ENCODE measurements at regions of chr5 and their contacts with region 1.

Region 1: DNA sequence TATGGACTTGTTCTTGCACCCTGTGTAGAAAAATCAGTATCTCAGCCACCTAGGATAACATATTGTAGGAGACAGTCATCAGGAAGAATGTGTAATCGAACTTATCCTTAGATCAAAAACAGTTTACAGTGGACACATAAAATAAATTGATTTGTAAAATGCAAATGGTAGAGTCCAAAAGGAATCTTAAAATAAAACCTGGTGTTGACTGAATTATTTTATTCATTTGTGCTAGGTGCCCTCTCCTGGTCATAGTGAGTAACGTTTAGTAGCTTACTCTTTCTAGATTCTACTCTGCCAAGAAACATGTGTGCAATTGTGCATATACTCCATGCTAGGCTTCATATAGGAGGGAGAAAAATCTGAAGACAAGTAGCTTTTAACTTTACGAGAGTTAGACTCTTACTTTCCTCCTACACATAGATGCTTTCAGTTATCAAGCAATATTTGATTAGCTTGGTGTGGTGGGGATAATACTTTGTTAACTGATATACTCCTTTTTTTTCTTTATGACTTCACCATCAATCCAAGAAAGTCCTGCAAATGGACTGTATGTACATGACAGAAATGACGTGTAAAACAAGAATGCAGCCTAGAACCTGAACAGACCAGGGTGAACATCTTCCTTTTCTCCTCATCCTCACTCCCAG is 23.7 kb upstream of the LOX start:
- DNase-seq: no peak
- H3K4me3 ChIP-seq: no peak overlapping the region
- CTCF ChIP-seq: peak; percentile 46

Region 2: GRCh38 chr5:121962347-121962670 is 139.5 kb before region 1 on chr5:
- CTCF ChIA-PET with region 1: interaction called, 33 read pairs
- POLR2A ChIA-PET with region 1: no interaction called
- DNase-seq: no peak
- H3K4me3 ChIP-seq: peak overlapping the region; percentile 99
- CTCF ChIP-seq: no peak

Region 3: GRCh38 chr5:121968910-121969607 is 132.7 kb before region 1 on chr5:
- CTCF ChIA-PET with region 1: interaction called, 33 read pairs
- POLR2A ChIA-PET with region 1: no interaction called
- DNase-seq: peak; percentile 97
- H3K4me3 ChIP-seq: no peak overlapping the region
- CTCF ChIP-seq: no peak

Region 4: DNA sequence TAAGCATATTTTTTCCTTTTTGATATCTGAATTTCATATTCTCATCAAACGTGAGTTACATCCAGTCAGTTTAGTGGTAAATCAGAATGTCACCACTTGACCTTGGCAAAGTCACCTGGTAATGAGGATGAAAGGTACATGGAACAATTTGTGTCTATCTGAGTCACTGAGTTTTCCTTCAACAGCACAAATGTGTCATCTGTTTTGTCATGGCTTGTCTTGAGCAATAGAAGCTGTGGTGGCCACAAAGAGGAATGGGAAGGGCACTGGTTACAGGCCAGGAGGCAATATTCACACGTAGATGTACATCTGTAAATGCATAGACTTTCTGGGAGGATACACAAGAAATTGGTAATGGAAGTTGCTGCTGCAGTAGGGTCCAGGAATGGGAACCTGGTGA is 19.2 kb after region 1 on chr5:
- CTCF ChIA-PET with region 1: interaction called, 14 read pairs
- POLR2A ChIA-PET with region 1: no interaction called
- DNase-seq: no peak
- H3K4me3 ChIP-seq: no peak overlapping the region
- CTCF ChIP-seq: no peak

Region 5: DNA sequence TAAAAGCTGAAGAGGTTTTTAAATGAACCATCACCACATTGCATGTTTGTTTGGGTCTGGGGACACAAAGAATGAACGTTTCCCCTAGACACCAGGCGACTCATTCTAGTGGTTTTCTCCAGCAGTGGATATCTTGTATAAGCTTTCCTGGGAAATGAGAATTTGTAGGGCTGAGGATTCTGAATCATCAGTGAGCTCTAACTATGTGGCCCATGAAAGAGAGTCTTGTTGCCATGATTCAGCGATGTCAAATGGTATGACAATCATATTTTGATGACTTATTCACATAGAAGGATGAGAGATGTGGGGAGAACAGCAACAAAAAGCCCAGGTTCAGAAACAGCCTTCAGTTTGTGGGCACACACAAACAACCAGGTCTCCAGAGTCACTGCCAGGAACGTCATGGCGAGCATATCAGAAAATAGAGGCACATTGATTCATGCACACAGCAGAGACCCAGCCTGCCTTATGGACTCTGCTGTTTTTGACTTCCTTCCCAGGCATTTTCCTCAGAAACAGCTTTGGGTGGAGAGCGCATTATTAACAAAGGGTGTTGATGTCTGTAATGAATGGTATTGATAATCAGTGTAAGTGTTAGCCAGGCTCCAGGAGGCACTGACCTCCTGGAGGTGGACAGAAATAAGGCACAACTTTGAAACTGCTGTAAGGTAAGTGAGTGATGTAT is 40.9 kb after region 1 on chr5:
- CTCF ChIA-PET with region 1: interaction called, 12 read pairs
- POLR2A ChIA-PET with region 1: interaction called, 3 read pairs
- DNase-seq: no peak
- H3K4me3 ChIP-seq: no peak overlapping the region
- CTCF ChIP-seq: no peak

Region 6: GRCh38 chr5:122611401-122611800 is 509.6 kb after region 1 on chr5:
- CTCF ChIA-PET with region 1: no interaction called
- POLR2A ChIA-PET with region 1: no interaction called
- DNase-seq: no peak
- H3K4me3 ChIP-seq: no peak overlapping the region
- CTCF ChIP-seq: no peak